GM18951 (cell line): ENCODE measurements at regions of chr17 and their contacts with region 1.

Region 1: GRCh38 chr17:29931231-29931932 is 1.4 kb upstream of the SSH2 start:
- POLR2A ChIP-seq: no peak

Region 2: GRCh38 chr17:29633886-29634285 is 297.5 kb before region 1 on chr17:
- in situ Hi-C with region 1: loop called (anchors 10 kb)
- POLR2A ChIP-seq: no peak

Region 3: GRCh38 chr17:29789196-29790170 is 141.9 kb before region 1 on chr17:
- in situ Hi-C with region 1: no loop called
- POLR2A ChIP-seq: no peak

Region 4: DNA sequence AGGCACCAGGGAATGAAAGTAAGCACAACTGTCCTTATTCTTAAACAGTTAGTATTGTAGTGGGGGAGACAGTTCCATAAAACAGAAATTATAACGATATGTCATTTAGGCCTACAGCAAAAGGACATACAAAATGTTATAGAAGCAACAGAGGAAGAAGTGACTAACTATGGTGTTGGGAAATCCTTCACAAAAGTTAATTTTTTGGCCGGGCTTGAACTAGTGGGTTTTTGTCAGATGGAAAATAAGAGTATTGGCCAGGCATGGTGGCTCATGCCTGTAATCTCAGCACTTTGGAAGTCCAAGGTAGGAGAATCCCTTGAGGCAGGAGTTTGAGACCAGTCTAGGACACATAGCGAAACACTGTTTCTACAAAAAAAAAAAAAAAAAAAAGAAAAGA is 129.1 kb before region 1 on chr17:
- in situ Hi-C with region 1: loop called (anchors 5 kb)
- POLR2A ChIP-seq: no peak

Region 5: DNA sequence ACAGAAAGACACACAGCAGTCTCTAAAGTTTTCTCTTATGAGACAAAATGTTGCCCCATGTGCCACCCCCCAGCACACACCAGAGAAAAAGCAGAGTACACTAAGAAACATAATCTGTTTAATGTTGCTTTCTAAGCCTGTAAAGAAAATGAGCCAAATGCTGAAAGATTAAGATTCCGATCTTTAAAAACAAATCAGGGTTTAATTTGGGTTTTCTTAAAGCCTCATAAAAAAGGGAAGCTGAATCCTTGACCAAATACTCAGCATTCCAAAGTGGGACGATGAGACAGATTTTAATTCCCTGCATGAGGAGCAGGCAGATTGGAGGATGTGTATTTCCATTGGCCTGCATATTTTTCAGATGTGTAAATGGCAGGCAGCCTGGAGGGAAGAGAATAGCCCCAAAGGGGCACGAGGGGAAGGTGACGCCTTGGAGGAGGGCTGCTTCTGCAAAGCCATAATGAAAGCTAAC is 1809.3 kb after region 1 on chr17:
- in situ Hi-C with region 1: no loop called
- POLR2A ChIP-seq: no peak